GM12878 (cell line): ENCODE measurements at regions of chr12 and their contacts with region 1.

Region 1: DNA sequence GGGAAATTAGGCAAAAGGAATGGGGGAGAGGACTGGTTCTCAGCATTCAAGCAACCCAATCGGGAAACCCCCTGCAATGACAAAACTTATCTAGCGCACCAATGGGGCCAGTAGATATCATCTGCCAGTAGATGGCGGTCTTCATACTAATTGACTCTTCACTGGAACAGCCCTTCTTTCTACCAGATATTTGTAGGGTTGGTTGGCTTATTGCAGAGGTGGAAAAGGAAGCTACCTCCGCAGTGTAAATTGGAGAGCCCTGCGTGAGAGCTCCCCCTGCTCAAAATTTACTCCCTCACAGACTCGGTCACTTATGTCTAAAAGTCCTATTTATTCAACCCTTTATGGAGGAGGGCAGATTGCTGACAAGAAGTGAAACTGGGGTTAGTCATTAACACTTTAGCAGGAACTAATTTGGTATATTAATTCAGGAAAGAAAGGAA is 166.1 kb upstream of the CCND2 start:
- DNase-seq: peak; percentile 86
- ATAC-seq: peak; percentile 94
- H3K4me3 ChIP-seq: no peak overlapping the region
- H3K27ac ChIP-seq: peak overlapping the region; percentile 13; the same call in 1 of the 2 replicates
- H3K4me1 ChIP-seq: peaks cover 24% of the 10 kb centered on the region
- H3K27me3 ChIP-seq: no peaks in the 10 kb centered on the region
- CTCF ChIP-seq: peak; percentile 70 to 86 (median 84)
- EP300 ChIP-seq: no peak; a peak in 1 of 4 replicates
- POLR2A ChIP-seq: no peak
- RAD21 ChIP-seq: peak; percentile 88

Region 2: DNA sequence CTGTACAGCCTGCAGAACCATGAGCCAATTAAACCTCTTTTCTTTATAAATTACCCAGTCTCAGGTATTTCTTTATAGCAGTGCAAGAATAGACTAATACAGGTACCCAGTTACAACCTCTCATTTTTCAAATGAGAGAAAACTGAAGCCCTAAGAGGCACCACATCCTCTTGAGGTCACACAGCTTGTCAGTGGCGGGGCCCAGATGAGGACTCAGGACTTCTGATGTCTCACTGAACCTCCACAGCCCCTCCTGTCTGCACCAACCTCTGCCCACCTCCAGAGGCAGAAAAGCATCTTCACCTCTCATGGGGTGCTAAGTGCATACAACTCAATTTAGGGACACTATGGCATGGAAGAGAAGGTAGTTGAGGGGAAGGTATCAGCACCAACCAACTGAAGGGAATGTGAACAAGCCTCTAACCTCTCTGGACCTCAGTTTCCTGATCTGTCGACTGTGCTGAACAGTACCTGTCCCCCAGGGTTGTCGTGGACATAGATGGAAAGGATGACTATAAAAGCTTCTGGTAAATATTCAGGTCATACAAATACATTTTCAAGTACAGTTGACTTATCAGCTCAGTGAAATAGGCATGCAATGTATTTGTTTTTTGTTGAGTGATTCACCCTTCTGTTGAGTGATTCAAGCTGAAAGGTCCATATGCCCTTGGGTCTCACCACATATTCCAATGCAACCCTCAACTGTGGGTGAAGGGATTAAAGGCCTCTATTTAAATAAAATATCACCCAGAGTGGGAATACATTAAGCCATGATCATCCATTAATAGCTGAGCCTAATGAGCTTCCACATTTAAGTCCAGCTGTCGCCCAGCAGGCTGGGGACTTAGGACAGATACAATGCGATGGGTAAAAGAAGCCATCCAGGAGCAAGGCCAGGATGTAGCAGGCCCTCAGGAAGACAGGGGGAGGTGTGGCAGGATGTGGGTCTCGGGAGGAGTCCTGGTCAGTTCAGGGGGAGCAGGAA is 474.9 kb before region 1 on chr12:
- CTCF ChIA-PET with region 1: no interaction called
- POLR2A ChIA-PET with region 1: no interaction called
- RAD21 ChIA-PET with region 1: no interaction called
- SMC1A ChIA-PET with region 1: no interaction called
- in situ Hi-C with region 1: no loop called
- intact Hi-C with region 1: no loop called
- DNase-seq: no peak
- ATAC-seq: no peak
- H3K4me3 ChIP-seq: no peak overlapping the region
- H3K27ac ChIP-seq: no peak overlapping the region
- H3K4me1 ChIP-seq: no peaks in the 10 kb centered on the region
- H3K27me3 ChIP-seq: no peaks in the 10 kb centered on the region
- CTCF ChIP-seq: no peak
- EP300 ChIP-seq: no peak
- POLR2A ChIP-seq: no peak
- RAD21 ChIP-seq: no peak

Region 3: GRCh38 chr12:4089121-4089606 is 18.3 kb before region 1 on chr12:
- CTCF ChIA-PET with region 1: interaction called, 23 read pairs
- POLR2A ChIA-PET with region 1: interaction called, 3 read pairs
- RAD21 ChIA-PET with region 1: interaction called, 4 read pairs
- SMC1A ChIA-PET with region 1: interaction called, 4 read pairs
- in situ Hi-C with region 1: no loop called
- intact Hi-C with region 1: no loop called
- DNase-seq: no peak
- ATAC-seq: no peak
- H3K4me3 ChIP-seq: no peak overlapping the region
- H3K27ac ChIP-seq: no peak overlapping the region
- H3K4me1 ChIP-seq: no peaks in the 10 kb centered on the region; the same call in 1 of the 2 replicates
- H3K27me3 ChIP-seq: no peaks in the 10 kb centered on the region
- CTCF ChIP-seq: no peak
- EP300 ChIP-seq: no peak
- POLR2A ChIP-seq: no peak
- RAD21 ChIP-seq: no peak

Region 4: DNA sequence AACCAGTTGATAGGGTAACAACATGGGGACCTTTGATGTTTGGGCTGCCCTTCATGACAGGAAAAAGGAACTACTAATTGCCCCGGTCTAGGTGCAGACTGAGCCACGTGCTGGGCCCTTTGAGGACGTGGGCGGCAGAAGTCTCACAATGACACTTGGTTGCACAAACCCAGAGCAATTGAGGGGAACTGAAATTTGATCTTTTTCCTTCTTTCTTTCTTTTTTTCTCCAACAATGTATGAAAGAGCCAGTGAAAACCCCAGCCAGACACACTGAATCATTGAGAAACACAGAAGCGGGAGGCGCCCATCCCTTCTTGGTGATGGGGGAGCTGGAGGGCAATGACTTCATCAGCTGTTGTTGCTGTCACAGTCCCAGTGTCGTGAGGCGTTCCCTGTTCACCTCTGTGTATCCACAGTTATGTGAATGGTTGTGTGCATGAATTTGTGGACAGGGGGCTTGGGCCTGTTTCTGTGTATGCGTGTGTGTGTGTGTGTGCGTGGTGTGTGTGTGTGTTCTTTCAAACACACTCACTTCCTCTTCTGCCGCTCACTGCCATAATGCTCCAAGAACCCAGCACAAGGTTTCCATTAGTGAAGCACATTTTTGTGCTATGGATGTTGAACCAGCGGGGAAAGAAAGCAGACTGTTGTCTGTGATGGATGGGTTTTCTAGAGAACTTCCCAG is 28.6 kb after region 1 on chr12:
- CTCF ChIA-PET with region 1: interaction called, 256 read pairs
- POLR2A ChIA-PET with region 1: interaction called, 245 read pairs
- RAD21 ChIA-PET with region 1: interaction called, 360 read pairs
- SMC1A ChIA-PET with region 1: interaction called, 395 read pairs
- in situ Hi-C with region 1: no loop called
- intact Hi-C with region 1: no loop called
- DNase-seq: peak; percentile 94
- ATAC-seq: peak; percentile 88
- H3K4me3 ChIP-seq: peak overlapping the region; percentile 55; the same call in 1 of the 2 replicates
- H3K27ac ChIP-seq: peak overlapping the region; percentile 64
- H3K4me1 ChIP-seq: peaks cover 65% of the 10 kb centered on the region
- H3K27me3 ChIP-seq: no peaks in the 10 kb centered on the region
- CTCF ChIP-seq: no peak
- EP300 ChIP-seq: peak; percentile 85 to 87; a peak in 3 of 4 replicates
- POLR2A ChIP-seq: no peak
- RAD21 ChIP-seq: no peak

Region 5: GRCh38 chr12:4148418-4149056 is 41.1 kb after region 1 on chr12:
- CTCF ChIA-PET with region 1: interaction called, 256 read pairs
- POLR2A ChIA-PET with region 1: interaction called, 245 read pairs
- RAD21 ChIA-PET with region 1: interaction called, 360 read pairs
- SMC1A ChIA-PET with region 1: interaction called, 395 read pairs
- in situ Hi-C with region 1: no loop called
- intact Hi-C with region 1: loop called (anchors 2 kb)
- DNase-seq: peak; percentile 93
- ATAC-seq: peak; percentile 72
- H3K4me3 ChIP-seq: no peak overlapping the region
- H3K27ac ChIP-seq: peak overlapping the region; percentile 72
- H3K4me1 ChIP-seq: peaks cover 77% of the 10 kb centered on the region
- H3K27me3 ChIP-seq: no peaks in the 10 kb centered on the region
- CTCF ChIP-seq: no peak
- EP300 ChIP-seq: peak in 1 of 2 experiments; percentile 74; a peak in 1 of 4 replicates
- POLR2A ChIP-seq: no peak
- RAD21 ChIP-seq: no peak

Region 6: GRCh38 chr12:4261655-4262054 is 154.2 kb after region 1 on chr12:
- CTCF ChIA-PET with region 1: interaction called, 7 read pairs
- POLR2A ChIA-PET with region 1: interaction called, 14 read pairs
- RAD21 ChIA-PET with region 1: interaction called, 129 read pairs
- SMC1A ChIA-PET with region 1: interaction called, 10 read pairs
- in situ Hi-C with region 1: no loop called
- intact Hi-C with region 1: no loop called
- DNase-seq: peak; percentile 64
- ATAC-seq: peak; percentile 96
- H3K4me3 ChIP-seq: no peak overlapping the region
- H3K27ac ChIP-seq: peak overlapping the region; percentile 80
- H3K4me1 ChIP-seq: peaks cover 15% of the 10 kb centered on the region
- H3K27me3 ChIP-seq: no peaks in the 10 kb centered on the region
- CTCF ChIP-seq: no peak
- EP300 ChIP-seq: no peak
- POLR2A ChIP-seq: no peak
- RAD21 ChIP-seq: no peak

Region 7: GRCh38 chr12:4628406-4628805 is 520.9 kb after region 1 on chr12:
- CTCF ChIA-PET with region 1: no interaction called
- POLR2A ChIA-PET with region 1: no interaction called
- RAD21 ChIA-PET with region 1: no interaction called
- SMC1A ChIA-PET with region 1: no interaction called
- in situ Hi-C with region 1: no loop called
- intact Hi-C with region 1: no loop called
- DNase-seq: no peak
- ATAC-seq: no peak
- H3K4me3 ChIP-seq: no peak overlapping the region
- H3K27ac ChIP-seq: no peak overlapping the region
- H3K4me1 ChIP-seq: no peaks in the 10 kb centered on the region
- H3K27me3 ChIP-seq: no peaks in the 10 kb centered on the region; a peak in 1 of 4 replicates
- CTCF ChIP-seq: no peak
- EP300 ChIP-seq: no peak
- POLR2A ChIP-seq: no peak
- RAD21 ChIP-seq: no peak

Region 8: DNA sequence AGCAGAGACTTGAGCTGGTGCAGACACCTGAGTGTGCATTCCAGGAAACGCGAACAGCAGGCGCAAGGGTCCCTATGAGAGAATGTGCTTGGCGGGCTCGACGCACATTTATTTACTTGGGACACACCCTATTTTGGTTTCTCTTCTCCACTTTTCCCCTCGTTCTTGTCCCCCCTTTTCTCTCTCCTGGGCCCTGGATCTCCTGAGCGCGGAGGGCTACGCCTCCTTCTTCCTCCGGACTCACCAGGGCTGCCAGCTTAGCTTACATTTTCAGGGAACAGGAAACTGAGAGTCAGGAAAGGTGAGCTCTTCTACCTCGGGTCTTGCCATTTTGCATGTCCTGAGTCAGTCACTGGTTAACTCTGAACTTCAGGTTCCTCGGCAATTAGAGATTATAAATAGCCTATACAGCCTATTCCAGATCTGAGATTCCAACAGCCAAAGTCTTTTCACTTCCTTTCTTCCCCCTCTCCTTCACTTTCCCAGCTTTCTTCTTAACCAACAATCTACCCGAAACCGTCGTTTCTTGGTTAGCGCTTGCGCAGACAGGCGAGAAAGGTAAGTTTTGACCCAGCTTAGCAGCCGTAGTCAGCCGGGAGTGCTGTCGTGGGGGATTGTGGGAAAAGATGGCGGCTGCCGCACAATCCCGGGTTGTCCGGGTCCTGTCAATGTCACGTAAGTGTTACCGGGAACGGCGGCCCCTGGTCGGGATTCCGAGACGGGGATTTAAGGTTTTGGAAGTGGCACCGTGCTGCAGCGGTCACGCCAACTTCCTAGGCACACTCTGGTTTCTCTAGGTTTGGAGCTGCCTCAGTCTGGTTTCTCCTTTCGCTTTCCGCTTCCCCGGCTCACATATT is 541.3 kb after region 1 on chr12 and contains the starts of genes AKAP3 and NDUFA9:
- CTCF ChIA-PET with region 1: no interaction called
- POLR2A ChIA-PET with region 1: no interaction called
- RAD21 ChIA-PET with region 1: no interaction called
- SMC1A ChIA-PET with region 1: no interaction called
- in situ Hi-C with region 1: no loop called
- intact Hi-C with region 1: no loop called
- DNase-seq: peak; percentile 64
- ATAC-seq: peak; percentile 96
- H3K4me3 ChIP-seq: peak within 1 kb of the TSS; percentile 92
- H3K27ac ChIP-seq: peak within 1 kb of the TSS; percentile 93
- H3K4me1 ChIP-seq: peaks cover 16% of the 10 kb centered on the region; the same call in 1 of the 2 replicates
- H3K27me3 ChIP-seq: no peaks in the 10 kb centered on the region
- CTCF ChIP-seq: no peak
- EP300 ChIP-seq: no peak
- POLR2A ChIP-seq: peak; percentile 95
- RAD21 ChIP-seq: no peak
- polyA plus RNA-seq, gene AKAP3: 0.40 to 0.47 TPM
- polyA plus RNA-seq, gene NDUFA9: 360 to 472 TPM